IMR-90 (cell line): ENCODE measurements at regions of chr4 and their contacts with region 1.

Region 1: DNA sequence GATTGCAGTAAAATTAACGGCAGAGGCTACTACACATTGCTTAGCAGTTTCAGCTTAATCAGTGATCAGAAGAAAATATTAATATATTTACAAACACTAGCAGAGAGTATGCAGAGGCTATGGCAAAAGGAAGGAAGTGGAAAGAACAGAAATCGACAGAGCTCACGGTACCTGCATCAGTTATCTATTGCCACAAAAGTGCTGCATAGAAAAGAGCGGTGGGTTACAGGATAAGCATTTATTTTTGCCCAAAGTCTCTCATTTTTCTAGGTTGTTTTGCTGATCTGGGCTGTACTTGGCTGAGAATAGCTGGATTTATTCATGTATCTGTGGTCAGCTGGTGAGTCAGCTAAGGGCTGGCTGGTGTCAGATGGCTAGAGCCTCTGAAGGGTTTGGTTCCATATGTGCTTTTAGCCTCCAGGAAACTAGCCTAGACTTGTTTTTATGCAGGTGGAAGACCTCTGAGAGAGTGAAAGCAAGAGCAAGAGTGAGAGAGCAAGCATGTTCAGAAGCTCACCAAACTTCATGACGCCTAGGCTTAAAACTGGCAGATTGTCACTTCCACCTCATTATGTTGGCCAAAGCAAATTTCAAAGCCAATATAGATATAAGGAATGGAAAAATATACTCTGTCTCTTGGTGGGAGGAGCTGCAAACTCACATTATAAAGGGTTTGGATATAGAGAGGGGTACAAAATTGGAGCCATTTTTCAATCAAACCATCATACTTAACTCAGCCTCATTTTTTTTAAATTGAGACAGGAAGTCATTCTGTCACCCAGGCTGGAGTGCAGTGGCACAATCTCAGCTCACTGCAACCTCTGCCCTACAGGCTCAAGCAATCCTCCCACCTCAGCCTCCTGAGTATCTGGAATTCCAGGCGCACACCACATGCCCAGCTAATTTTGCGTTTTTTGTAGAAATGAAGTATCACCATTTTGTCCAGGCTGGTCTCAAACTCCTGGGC is 153.2 kb upstream of the RPL34 start:
- DNase-seq: peak; percentile 93
- ATAC-seq: peak; percentile 99
- H3K4me3 ChIP-seq: no peak overlapping the region
- H3K27ac ChIP-seq: peak overlapping the region; percentile 61; the same call in 1 of the 2 replicates
- H3K4me1 ChIP-seq: peaks cover 7% of the 10 kb centered on the region
- H3K27me3 ChIP-seq: no peaks in the 10 kb centered on the region; the same call in none of the 2 replicates
- CTCF ChIP-seq: no peak
- POLR2A ChIP-seq: no peak
- RAD21 ChIP-seq: no peak

Region 2: DNA sequence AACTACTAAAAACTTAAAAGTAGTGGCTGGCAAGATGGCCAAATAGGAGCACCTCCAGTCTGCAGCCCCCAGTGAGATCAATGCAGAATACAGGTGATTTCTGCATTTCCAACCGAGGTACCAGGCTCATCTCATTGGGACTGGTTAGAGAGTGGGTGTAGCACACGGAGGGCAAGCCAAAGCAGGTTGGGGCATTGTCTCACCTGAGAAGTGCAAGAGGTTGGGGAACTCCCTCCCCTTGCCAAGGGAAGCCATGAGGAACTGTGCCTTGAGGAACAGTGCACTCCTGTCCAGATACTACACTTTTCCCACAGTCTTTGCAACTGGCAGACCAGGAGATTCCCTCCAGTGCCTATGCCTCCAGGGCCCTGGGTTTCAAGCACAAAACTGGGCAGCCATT is 1058.3 kb before region 1 on chr4:
- CTCF ChIA-PET with region 1: no interaction called
- POLR2A ChIA-PET with region 1: no interaction called
- dilution Hi-C with region 1: no loop called
- in situ Hi-C with region 1: no loop called
- intact Hi-C with region 1: loop called (anchors 5 kb)
- DNase-seq: no peak
- ATAC-seq: no peak
- H3K4me3 ChIP-seq: no peak overlapping the region
- H3K27ac ChIP-seq: no peak overlapping the region
- H3K4me1 ChIP-seq: no peaks in the 10 kb centered on the region
- H3K27me3 ChIP-seq: no peaks in the 10 kb centered on the region
- CTCF ChIP-seq: no peak
- POLR2A ChIP-seq: no peak
- RAD21 ChIP-seq: no peak

Region 3: DNA sequence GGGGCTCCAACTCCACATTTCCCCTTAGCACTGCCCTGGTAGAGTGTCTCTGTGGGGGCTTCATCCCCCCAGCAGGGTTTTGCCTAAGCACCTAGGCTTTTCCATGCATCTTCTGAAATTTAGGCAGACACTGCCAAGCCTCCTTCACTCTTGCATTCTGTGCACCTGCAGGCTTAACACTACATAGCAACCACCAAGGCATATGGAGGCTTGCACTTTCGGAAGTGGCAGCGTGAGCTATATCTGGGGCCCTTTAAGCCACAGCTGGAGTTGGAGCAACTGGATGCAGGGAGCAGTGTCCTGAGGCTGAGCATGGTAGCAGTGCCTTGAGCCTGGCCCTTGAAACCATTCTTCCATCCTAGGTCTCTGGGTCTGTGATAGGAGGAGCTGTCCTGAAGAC is 61.6 kb before region 1 on chr4:
- CTCF ChIA-PET with region 1: no interaction called
- POLR2A ChIA-PET with region 1: no interaction called
- dilution Hi-C with region 1: no loop called
- in situ Hi-C with region 1: no loop called
- intact Hi-C with region 1: no loop called
- DNase-seq: no peak
- ATAC-seq: no peak
- H3K4me3 ChIP-seq: no peak overlapping the region
- H3K27ac ChIP-seq: no peak overlapping the region
- H3K4me1 ChIP-seq: no peaks in the 10 kb centered on the region
- H3K27me3 ChIP-seq: peaks cover 3% of the 10 kb centered on the region
- CTCF ChIP-seq: no peak
- POLR2A ChIP-seq: no peak
- RAD21 ChIP-seq: no peak